Heart left ventricle (tissue), 16 donors: ENCODE measurements at regions of chr18 and their contacts with region 1.

Region 1: GRCh38 chr18:43396266-43396665 is 119.0 kb upstream of the SYT4 start:
- DNase-seq: no peak
- ATAC-seq: no peak
- H3K4me3 ChIP-seq: no peak overlapping the region
- H3K27ac ChIP-seq: no peak overlapping the region
- H3K4me1 ChIP-seq: no peaks in the 10 kb centered on the region
- H3K27me3 ChIP-seq: peaks cover 0 to 3% (median 0%) of the 10 kb centered on the region in 9 donors
- CTCF ChIP-seq: peak in 8 of 12 donors; percentile 14 to 50 (median 44)
- POLR2A ChIP-seq: no peak

Region 2: DNA sequence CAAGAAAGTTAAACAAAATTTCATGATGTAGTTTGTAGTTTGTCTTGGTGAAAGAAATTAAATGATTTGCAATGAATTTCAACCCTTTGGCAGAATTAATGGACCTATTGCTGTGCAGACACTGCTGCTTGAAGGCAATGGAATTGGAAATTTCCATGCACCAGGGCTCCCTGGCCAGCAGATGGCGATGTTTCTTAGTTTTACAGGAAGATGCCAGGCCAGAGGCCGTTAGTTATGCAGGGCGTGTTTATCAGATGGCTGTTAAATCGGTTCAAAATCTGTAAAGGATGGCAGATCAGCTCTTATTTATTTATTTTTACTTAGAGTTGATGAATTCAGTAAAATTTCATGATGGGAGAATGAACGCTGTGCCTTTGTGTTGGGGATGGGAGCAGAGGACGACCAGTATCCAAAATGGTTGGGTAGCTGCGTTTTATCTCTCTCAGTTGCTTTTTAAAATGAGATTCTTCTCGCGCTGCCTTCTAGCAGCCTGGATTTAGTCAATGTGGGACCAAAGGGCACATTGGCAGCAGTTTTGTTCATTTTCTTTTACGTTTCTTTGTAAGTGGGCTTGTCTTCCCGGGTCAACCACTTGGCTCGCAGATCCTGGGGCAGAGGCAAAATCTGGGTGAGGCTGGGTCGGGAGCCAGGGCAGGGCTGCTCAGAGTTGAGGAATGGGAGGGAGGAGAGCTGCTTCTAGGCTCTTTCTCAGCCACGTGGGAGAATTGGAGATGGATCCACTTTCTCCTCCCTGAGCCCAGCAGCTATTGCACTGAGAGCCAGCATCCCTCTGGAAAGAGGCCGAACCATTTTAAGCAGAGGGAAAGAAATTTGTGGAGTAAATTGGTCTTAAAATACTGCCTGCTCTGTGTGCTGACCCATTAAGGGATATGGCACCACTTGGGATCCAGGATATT is 1097.2 kb before region 1 on chr18:
- intact Hi-C with region 1: loop called in 2 of 10 experiments (anchors 10 kb)
- DNase-seq: peak in 4 of 5 donors; percentile 54 to 58 (median 57)
- ATAC-seq: peak; percentile 20 to 94 (median 82)
- H3K4me3 ChIP-seq: peak overlapping the region in 11 of 12 donors; percentile 1 to 43 (median 19)
- H3K27ac ChIP-seq: peak overlapping the region in 6 of 12 donors; percentile 9 to 40 (median 27)
- H3K4me1 ChIP-seq: peaks cover 0 to 3% (median 0%) of the 10 kb centered on the region in 12 donors
- H3K27me3 ChIP-seq: no peaks in the 10 kb centered on the region
- CTCF ChIP-seq: peak; percentile 83 to 96 (median 90)
- POLR2A ChIP-seq: no peak

Region 3: GRCh38 chr18:42798606-42799170 is 597.6 kb before region 1 on chr18:
- intact Hi-C with region 1: no loop called
- DNase-seq: no peak
- ATAC-seq: no peak
- H3K4me3 ChIP-seq: no peak overlapping the region
- H3K27ac ChIP-seq: no peak overlapping the region
- H3K4me1 ChIP-seq: no peaks in the 10 kb centered on the region
- H3K27me3 ChIP-seq: no peaks in the 10 kb centered on the region
- CTCF ChIP-seq: no peak
- POLR2A ChIP-seq: no peak